ENCODE measurements at regions of chr22 and their contacts with region 1.

Region 1: GRCh38 chr22:24030186-24030702 is 19.1 kb downstream of the CABIN1 start:
- DNase-seq: peak; percentile 4

Region 2: DNA sequence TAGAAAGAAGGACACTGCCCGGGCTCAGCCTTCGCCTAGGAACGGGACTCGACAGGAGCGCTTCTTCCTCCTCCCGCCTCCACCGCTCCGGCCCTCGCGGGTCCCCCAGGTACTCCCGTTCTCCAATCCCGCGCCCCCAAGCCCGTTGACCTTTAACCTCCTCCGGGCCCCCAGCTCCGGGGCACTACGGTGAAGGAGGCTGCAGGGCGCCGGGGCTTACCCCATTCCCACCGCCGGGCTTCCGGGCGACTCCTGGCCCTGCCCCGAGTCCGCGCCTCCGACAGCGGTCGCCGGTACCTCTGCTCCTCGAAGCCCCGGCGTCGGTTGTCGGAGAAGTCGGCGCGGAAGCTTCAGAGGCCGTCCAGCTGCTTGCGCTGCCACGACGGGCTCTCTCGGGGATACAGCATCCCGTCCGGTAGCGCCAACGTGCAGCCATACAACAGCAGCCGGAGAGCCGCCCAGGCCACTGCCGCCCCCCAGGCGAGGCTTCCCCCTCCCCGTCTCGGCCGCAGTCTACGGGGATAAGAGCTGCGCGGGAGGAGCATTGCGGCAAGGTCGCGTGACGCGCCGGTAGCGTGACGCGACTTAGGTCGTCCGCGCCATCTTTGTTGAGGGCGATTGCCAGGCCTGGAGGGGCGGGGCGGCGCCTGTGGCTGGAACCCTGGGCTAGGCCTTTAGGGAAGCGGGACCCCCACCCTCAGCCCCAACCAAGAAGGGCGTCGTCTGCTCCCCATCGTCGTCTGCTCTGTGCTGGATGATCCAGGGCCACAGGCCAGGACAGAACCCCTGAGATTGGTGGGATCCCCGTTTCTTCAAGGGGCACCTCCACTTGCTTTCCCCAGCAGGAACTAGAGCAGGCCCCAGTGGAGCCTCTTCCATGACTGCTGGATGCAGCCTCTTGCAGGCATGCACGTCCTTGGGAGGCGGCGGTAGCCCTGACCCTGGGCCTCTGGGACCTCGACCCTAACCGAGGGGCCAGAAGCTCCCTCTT is 313.1 kb before region 1 on chr22:
- CTCF ChIA-PET with region 1: no interaction called
- POLR2A ChIA-PET with region 1: no interaction called
- DNase-seq: peak; percentile 97

Region 3: GRCh38 chr22:24011735-24012068 is 18.5 kb before region 1 on chr22:
- CTCF ChIA-PET with region 1: interaction called, 3 read pairs
- POLR2A ChIA-PET with region 1: interaction called, 14 read pairs
- DNase-seq: peak; percentile 35

Measured in HEK293T (cell line).